ENCODE measurements at regions of chr14 and their contacts with region 1.

Region 1: DNA sequence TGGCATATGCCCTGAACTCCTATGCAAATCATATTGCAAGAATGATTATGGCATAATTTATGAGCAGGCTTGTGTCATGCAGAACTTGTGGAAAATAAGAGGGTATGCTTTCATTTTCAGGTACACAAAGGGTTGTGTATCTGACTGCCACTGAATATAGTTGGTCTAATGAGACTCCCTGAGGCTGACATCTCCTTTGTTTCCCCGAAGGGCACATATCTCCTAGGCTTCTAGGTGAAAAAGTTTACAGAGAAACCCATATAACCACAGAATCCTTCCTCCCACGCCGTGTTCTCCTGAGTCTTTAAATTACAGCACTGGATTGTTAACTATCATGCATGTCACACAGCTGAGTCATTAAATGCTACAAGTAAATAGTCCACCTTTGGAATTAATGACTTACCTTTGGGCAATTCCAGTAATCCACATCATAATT is 356.7 kb upstream of the DIO2 start:
- DNase-seq: peak; percentile 38 to 86
- H3K4me3 ChIP-seq: no peak overlapping the region
- H3K27ac ChIP-seq: peak overlapping the region; percentile 62
- H3K4me1 ChIP-seq: peaks cover 30% of the 10 kb centered on the region
- H3K27me3 ChIP-seq: no peaks in the 10 kb centered on the region
- CTCF ChIP-seq: no peak

Region 2: DNA sequence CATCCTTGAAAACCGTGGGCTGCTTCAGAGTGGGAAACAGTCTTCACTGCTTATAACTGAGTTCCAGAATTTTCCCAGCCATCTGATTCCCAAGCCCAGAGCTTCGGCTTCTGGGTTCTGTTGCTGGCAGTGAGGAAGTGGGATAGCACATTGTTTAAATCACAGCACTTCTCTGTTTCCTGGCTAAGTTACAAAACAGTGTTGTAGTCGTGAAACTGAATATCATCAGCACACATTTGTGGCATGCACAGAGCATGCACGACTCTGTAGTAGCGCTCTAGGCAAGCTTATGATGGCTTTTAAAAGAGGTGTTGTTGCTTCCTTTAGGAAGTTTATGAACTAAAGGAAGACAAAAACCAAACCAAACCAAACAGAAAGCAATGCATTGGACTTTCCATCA is 1392.3 kb before region 1 on chr14:
- CTCF ChIA-PET with region 1: no interaction called
- POLR2A ChIA-PET with region 1: no interaction called
- intact Hi-C with region 1: no loop called
- DNase-seq: no peak
- H3K4me3 ChIP-seq: no peak overlapping the region
- H3K27ac ChIP-seq: no peak overlapping the region
- H3K4me1 ChIP-seq: no peaks in the 10 kb centered on the region
- H3K27me3 ChIP-seq: no peaks in the 10 kb centered on the region; the same call in 1 of the 2 replicates
- CTCF ChIP-seq: no peak

Region 3: DNA sequence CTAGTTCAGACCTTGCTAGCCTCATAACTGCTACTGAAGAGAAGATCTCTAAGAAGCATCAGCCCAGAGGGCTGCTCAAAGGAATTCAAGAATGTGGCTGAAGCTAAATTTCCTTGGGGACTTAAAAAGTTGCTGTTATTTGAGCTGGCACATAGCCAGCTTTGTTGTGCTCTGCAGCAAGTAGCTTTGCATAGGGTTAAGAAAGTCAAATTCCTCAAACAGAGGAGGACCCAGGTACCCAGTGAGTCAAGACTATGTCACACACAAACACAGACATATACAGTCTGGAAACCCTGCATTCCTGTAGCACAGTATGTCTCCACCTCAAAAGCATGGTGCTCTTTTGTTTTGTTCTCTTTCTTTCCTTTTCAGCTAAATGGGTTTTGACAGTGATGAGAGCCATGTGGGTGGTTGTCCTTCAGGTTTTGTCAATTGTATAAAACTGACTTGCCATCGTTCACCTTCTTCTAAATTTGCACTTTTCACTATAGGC is 177.2 kb before region 1 on chr14:
- CTCF ChIA-PET with region 1: no interaction called
- POLR2A ChIA-PET with region 1: interaction called, 10 read pairs
- intact Hi-C with region 1: loop called (anchors 5 kb)
- DNase-seq: peak; percentile 59 to 87
- H3K4me3 ChIP-seq: no peak overlapping the region
- H3K27ac ChIP-seq: peak overlapping the region; percentile 49
- H3K4me1 ChIP-seq: peaks cover 40% of the 10 kb centered on the region
- H3K27me3 ChIP-seq: no peaks in the 10 kb centered on the region
- CTCF ChIP-seq: no peak

Region 4: GRCh38 chr14:80607430-80608190 is 39.6 kb after region 1 on chr14:
- CTCF ChIA-PET with region 1: no interaction called
- POLR2A ChIA-PET with region 1: no interaction called
- intact Hi-C with region 1: no loop called
- DNase-seq: no peak
- H3K4me3 ChIP-seq: no peak overlapping the region
- H3K27ac ChIP-seq: no peak overlapping the region
- H3K4me1 ChIP-seq: peaks cover 8% of the 10 kb centered on the region
- H3K27me3 ChIP-seq: no peaks in the 10 kb centered on the region
- CTCF ChIP-seq: no peak

Region 5: GRCh38 chr14:80636071-80636470 is 68.1 kb after region 1 on chr14:
- CTCF ChIA-PET with region 1: no interaction called
- POLR2A ChIA-PET with region 1: no interaction called
- intact Hi-C with region 1: no loop called
- DNase-seq: no peak
- H3K4me3 ChIP-seq: no peak overlapping the region
- H3K27ac ChIP-seq: peak overlapping the region; percentile 99
- H3K4me1 ChIP-seq: peaks cover 45% of the 10 kb centered on the region
- H3K27me3 ChIP-seq: no peaks in the 10 kb centered on the region
- CTCF ChIP-seq: 0 out of 2 replicates have a peak, but pooled peaks have one; percentile 21

Region 6: GRCh38 chr14:80678436-80678835 is 110.4 kb after region 1 on chr14:
- CTCF ChIA-PET with region 1: no interaction called
- POLR2A ChIA-PET with region 1: no interaction called
- intact Hi-C with region 1: no loop called
- DNase-seq: no peak
- H3K4me3 ChIP-seq: no peak overlapping the region
- H3K27ac ChIP-seq: no peak overlapping the region
- H3K4me1 ChIP-seq: no peaks in the 10 kb centered on the region
- H3K27me3 ChIP-seq: no peaks in the 10 kb centered on the region
- CTCF ChIP-seq: no peak

Measured in PC-9 (cell line).